Common myeloid progenitor, CD34-positive (primary cell): ENCODE measurements at regions of chr1 and their contacts with region 1.

Region 1: GRCh38 chr1:94504601-94505000 is 37.0 kb downstream of the F3 start:
- DNase-seq: no peak
- H3K4me3 ChIP-seq: no peak overlapping the region
- H3K27ac ChIP-seq: no peak overlapping the region
- H3K4me1 ChIP-seq: no peaks in the 10 kb centered on the region
- H3K27me3 ChIP-seq: no peaks in the 10 kb centered on the region

Region 2: DNA sequence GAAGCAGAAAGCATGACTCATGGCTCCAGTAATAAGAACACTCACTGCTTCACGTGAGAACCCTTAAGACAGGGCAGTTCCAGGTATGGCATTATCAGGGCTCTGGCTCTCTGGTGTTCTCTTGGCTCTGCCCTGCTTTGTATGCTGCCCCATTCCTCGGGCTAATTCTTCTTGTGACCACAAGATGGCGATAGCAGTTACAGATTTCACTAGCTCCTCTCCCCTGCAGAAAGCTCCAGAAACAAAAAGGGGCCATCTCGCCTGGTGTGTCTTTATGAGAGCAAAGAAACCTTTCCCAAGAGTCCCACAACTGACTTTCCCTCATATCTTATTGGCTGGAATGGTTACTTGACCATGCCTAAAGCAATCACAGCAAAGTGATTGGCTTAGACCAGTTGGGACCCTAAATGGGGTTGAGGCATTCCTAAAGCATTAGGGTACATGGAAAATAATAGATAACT is 23.1 kb before region 1 on chr1:
- CTCF ChIA-PET with region 1: interaction called, 11 read pairs
- POLR2A ChIA-PET with region 1: no interaction called
- DNase-seq: peak; percentile 61 to 79 (median 77)
- H3K4me3 ChIP-seq: no peak overlapping the region
- H3K27ac ChIP-seq: no peak overlapping the region
- H3K4me1 ChIP-seq: no peaks in the 10 kb centered on the region
- H3K27me3 ChIP-seq: no peaks in the 10 kb centered on the region